Lower leg skin (tissue), 4 donors: ENCODE measurements at regions of chr20 and their contacts with region 1.

Region 1: DNA sequence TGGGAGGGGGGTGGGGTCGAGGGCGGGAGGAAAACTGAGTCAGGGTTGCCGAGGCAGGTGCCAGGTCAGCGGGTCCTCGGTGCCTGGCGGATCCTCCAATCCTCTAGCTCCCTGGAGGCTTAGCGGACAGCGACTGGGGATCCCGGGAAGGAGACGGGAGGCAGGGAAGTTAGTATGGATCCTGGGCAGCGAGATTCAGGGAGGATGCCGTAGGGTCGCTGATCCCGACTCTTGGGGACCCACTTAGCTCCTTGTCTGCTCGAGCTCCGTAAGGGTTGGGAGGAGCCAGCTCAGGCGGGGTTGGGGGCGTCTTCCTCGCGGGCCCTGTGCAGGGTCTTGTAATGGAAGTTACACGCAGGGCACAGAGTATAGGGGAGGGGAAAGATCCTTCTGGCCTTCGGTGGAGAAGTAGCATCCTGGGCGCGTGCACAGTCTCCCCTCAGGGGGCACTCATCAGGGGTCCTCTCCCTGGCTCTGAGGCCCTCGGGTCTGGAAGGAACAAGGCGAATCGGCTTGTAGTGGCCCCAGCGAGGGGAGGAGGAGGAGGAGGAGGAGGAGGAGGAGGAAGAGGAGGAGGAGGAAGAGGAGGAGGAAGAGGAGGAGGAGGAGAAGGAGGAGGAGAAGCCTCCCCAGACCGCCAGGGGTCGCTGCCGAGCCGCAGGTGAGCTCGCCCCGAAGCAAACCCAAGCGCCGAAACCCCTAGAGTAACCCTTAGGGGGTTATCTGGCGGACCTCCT is 6.4 kb upstream of the SLC12A5 start:
- DNase-seq: no peak
- H3K4me3 ChIP-seq: no peak overlapping the region
- CTCF ChIP-seq: peak in 1 of 3 donors; percentile 69
- POLR2A ChIP-seq: no peak

Region 2: GRCh38 chr20:45857114-45857881 is 165.3 kb before region 1 on chr20 and contains the starts of genes ACOT8 and ZSWIM3:
- intact Hi-C with region 1: no loop called
- DNase-seq: peak; percentile 98 to 99
- H3K4me3 ChIP-seq: peak within 1 kb of the TSS; percentile 83
- CTCF ChIP-seq: peak in 1 of 3 donors; percentile 61
- POLR2A ChIP-seq: no peak
- total RNA-seq, gene ACOT8: 57.6 to 84.9 (median 61.4) TPM
- total RNA-seq, gene ZSWIM3: 3.7 to 4.6 (median 4.0) TPM

Region 3: GRCh38 chr20:46085179-46085851 is 62.7 kb after region 1 on chr20:
- intact Hi-C with region 1: loop called (anchors 2 kb)
- DNase-seq: no peak
- H3K4me3 ChIP-seq: no peak overlapping the region
- CTCF ChIP-seq: no peak
- POLR2A ChIP-seq: no peak

Region 4: GRCh38 chr20:46349035-46349741 is 326.6 kb after region 1 on chr20:
- intact Hi-C with region 1: loop called (anchors 10 kb)
- DNase-seq: peak in 1 of 2 donors; percentile 91
- H3K4me3 ChIP-seq: no peak overlapping the region
- CTCF ChIP-seq: no peak
- POLR2A ChIP-seq: no peak

Region 5: GRCh38 chr20:46423882-46424482 is 401.4 kb after region 1 on chr20:
- intact Hi-C with region 1: loop called (anchors 10 kb)
- DNase-seq: no peak
- H3K4me3 ChIP-seq: no peak overlapping the region
- CTCF ChIP-seq: no peak
- POLR2A ChIP-seq: no peak